MCF 10A (cell line): ENCODE measurements at regions of chr15 and their contacts with region 1.

Region 1: DNA sequence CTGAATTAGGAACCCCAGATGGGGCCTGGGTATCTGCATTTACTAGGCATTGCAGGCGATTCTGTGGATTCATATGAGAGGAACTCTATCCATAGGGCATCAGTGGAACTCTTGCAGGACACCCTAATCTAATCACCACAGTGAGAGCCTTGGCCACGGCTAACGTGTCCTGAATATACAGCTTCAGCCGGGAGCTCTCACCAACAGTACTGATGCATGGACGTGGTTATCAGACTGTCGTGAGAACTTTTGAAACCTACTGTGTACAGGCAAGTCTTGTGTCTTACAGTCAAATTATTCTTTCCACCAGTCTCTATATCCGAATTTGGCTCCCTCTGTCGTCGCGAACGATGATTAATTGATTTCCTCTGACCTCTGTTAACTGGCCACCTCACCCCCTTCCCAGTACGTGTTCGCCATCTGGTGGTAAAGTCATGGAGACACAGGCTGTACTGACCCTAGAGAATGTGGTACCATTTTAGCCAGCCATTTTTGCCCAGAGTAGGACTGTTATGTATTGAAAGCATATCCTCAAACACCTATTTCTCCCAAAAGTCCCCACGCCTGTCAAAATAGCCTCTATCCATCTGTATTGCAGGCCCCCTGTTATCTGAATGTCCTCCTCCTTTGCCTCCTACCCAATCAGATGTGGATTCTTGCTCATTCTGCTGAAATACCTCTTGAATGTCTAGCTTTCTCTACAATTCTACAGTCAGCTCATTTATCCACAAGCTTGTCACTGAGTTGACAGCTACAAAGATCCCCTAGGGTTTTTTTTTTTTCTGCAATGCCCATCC is 39.7 kb downstream of the GLDN start:
- DNase-seq: peak; percentile 87
- H3K4me3 Mint-ChIP-seq: no peak overlapping the region
- H3K27ac Mint-ChIP-seq: no peak overlapping the region
- H3K4me1 Mint-ChIP-seq: peaks cover 13% of the 10 kb centered on the region
- H3K27me3 Mint-ChIP-seq: no peaks in the 10 kb centered on the region
- CTCF ChIP-seq: peak; percentile 82

Region 2: DNA sequence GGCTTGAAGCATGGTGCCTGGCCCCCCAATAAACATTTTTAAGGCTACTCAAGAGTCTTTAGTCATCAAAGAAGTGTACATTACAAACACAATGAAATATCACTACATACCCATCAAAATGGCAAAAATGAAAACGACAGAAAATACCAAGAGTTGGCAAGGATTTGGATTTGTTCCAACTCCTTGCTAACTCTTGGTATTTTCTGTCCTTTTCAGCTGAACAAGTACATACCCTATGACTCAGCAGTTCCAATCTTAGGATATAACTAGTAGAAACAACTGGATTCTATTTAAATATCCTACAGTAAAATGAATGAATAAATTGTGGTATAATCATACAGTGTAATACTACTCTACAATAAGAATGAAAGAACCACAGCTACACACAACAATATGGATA is 1001.1 kb before region 1 on chr15:
- CTCF ChIA-PET with region 1: no interaction called
- POLR2A ChIA-PET with region 1: no interaction called
- intact Hi-C with region 1: no loop called
- DNase-seq: no peak
- H3K4me3 Mint-ChIP-seq: no peak overlapping the region
- H3K27ac Mint-ChIP-seq: no peak overlapping the region
- H3K4me1 Mint-ChIP-seq: no peaks in the 10 kb centered on the region
- H3K27me3 Mint-ChIP-seq: no peaks in the 10 kb centered on the region
- CTCF ChIP-seq: no peak

Region 3: GRCh38 chr15:50698101-50698500 is 683.1 kb before region 1 on chr15:
- CTCF ChIA-PET with region 1: interaction called, 13 read pairs
- POLR2A ChIA-PET with region 1: no interaction called
- intact Hi-C with region 1: no loop called
- DNase-seq: no peak
- H3K4me3 Mint-ChIP-seq: no peak overlapping the region
- H3K27ac Mint-ChIP-seq: no peak overlapping the region
- H3K4me1 Mint-ChIP-seq: no peaks in the 10 kb centered on the region
- H3K27me3 Mint-ChIP-seq: no peaks in the 10 kb centered on the region
- CTCF ChIP-seq: no peak

Region 4: GRCh38 chr15:50865515-50866353 is 515.5 kb before region 1 on chr15:
- CTCF ChIA-PET with region 1: no interaction called
- POLR2A ChIA-PET with region 1: no interaction called
- intact Hi-C with region 1: no loop called
- DNase-seq: no peak
- H3K4me3 Mint-ChIP-seq: no peak overlapping the region
- H3K27ac Mint-ChIP-seq: no peak overlapping the region
- H3K4me1 Mint-ChIP-seq: no peaks in the 10 kb centered on the region
- H3K27me3 Mint-ChIP-seq: peaks cover 11% of the 10 kb centered on the region
- CTCF ChIP-seq: no peak

Region 5: DNA sequence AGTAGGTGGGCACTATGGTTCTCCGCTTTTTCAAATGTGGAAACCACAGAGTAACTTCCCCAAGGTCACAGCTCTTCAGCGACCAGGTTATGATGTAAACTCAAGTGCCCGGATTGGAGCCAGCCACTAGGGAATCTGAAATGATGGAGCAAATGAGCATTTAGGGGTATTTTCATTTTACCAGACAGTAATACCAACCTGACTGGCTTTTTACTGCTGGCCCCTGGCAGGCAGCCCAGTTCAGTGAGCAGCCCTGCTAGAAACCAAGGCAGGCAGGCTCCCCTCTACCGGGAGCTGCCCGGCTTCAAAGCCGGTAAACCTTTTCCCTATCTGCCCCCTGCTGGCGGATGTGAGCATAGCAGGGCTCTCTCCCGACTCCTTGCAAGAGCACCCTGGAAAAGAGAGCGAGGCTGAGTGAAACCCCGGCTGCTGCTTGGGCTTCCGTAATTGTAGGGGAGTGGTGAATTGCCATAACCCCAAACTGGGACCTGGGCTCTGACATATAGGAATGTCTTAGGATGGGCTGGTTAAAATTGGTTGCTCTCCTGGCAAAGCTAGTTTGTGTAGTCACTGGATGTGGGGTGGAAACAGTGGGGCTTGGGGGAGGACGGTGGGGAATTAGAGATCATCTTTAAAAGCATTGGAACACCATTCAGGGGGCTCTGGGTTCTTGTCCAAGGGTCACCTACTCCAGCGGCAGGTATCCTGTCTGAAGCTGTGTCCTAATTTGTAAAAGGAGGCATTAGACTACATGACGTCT is 188.5 kb before region 1 on chr15:
- CTCF ChIA-PET with region 1: interaction called, 14 read pairs
- POLR2A ChIA-PET with region 1: interaction called, 3 read pairs
- intact Hi-C with region 1: no loop called
- DNase-seq: peak; percentile 91
- H3K4me3 Mint-ChIP-seq: no peak overlapping the region
- H3K27ac Mint-ChIP-seq: peak overlapping the region; percentile 7
- H3K4me1 Mint-ChIP-seq: peaks cover 24% of the 10 kb centered on the region
- H3K27me3 Mint-ChIP-seq: no peaks in the 10 kb centered on the region
- CTCF ChIP-seq: peak; percentile 89

Region 6: GRCh38 chr15:51227940-51228783 is 153.0 kb before region 1 on chr15:
- CTCF ChIA-PET with region 1: interaction called, 38 read pairs
- POLR2A ChIA-PET with region 1: no interaction called
- intact Hi-C with region 1: loop called (anchors 1 kb)
- DNase-seq: peak; percentile 82
- H3K4me3 Mint-ChIP-seq: peak overlapping the region; percentile 22
- H3K27ac Mint-ChIP-seq: peak overlapping the region; percentile 57
- H3K4me1 Mint-ChIP-seq: peaks cover 34% of the 10 kb centered on the region
- H3K27me3 Mint-ChIP-seq: no peaks in the 10 kb centered on the region
- CTCF ChIP-seq: no peak

Region 7: GRCh38 chr15:51281368-51281967 is 99.7 kb before region 1 on chr15:
- CTCF ChIA-PET with region 1: interaction called, 60 read pairs
- POLR2A ChIA-PET with region 1: no interaction called
- intact Hi-C with region 1: loop called (anchors 1 kb)
- DNase-seq: peak; percentile 69
- H3K4me3 Mint-ChIP-seq: no peak overlapping the region
- H3K27ac Mint-ChIP-seq: no peak overlapping the region
- H3K4me1 Mint-ChIP-seq: peaks cover 9% of the 10 kb centered on the region
- H3K27me3 Mint-ChIP-seq: peaks cover 17% of the 10 kb centered on the region
- CTCF ChIP-seq: peak; percentile 47

Region 8: DNA sequence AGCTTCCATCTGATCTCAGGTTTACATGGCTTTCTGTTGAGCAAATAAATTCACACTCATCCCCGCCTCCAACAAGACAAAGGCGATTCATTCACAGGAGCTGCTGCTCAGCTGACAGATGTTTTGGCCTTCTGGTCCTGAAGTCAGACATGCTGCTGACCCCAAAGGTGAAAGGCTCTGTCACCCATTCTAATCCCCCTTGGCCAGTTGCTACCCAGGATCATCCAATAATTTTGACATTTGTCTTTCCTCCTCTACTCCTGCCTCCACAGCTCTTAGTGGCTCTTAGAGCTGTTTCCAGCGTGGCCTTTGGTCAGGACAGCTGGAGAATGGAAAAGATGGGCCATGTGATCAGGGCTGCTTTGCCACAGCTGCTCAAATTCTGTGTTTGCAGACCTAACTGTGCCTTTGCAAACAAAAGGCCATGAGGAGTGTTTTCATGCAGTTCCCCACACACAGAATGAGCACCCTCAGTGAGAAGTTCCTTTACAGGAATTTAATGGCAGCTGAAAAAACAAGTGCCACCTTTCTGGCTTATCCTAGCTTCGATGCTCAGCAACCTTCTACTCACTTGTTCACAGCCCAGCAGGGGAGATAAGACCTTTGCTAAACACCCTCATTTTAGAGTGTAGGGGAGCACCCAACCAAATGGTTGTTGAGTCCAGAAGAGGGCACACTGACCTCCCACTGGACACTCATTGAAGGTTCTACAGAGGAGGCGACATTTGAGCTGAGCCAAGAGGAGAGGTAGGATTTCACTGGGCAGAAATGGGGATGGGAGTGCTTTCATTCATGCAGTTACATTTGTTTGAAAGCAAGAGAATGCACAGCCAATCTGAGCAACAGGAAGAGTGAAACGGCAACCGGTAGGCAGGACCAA is 81.8 kb before region 1 on chr15:
- CTCF ChIA-PET with region 1: interaction called, 10 read pairs
- POLR2A ChIA-PET with region 1: no interaction called
- intact Hi-C with region 1: no loop called
- DNase-seq: no peak
- H3K4me3 Mint-ChIP-seq: no peak overlapping the region
- H3K27ac Mint-ChIP-seq: no peak overlapping the region
- H3K4me1 Mint-ChIP-seq: no peaks in the 10 kb centered on the region
- H3K27me3 Mint-ChIP-seq: no peaks in the 10 kb centered on the region
- CTCF ChIP-seq: no peak

Region 9: DNA sequence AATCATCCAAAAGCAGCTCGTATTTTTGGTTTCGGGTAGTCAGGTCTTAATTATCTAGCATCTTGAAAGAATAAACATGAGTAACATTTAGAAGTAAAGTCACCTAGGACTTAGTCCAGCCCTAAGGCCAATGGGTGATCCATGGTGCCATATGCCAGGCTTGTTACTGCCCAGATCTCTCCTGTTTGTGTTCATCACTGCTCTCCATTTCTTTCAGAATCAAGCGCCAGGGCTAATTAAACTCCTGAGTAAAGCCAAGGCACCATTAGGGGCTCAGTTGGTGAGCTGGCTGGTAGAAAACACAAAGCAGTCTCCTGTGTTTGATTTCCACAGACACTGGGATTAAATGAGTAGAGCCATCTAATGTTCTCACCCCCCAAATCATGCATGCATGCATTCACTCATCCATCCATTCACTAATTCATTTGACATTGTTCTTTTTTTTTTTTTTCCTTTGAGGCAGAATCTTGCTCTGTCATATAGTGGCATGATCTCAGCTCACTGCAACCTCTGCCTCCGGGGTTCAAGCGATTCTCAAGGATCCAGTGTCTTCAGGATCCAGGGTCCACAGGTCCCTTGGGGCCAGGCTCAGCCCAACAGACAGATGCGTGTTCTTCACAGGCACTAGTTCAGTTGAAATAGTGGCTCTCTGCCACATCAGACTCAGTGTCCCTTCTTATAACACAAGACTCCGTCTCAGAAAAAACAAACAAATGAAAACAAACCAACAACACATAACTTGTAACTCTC is 54.0 kb before region 1 on chr15:
- CTCF ChIA-PET with region 1: no interaction called
- POLR2A ChIA-PET with region 1: no interaction called
- intact Hi-C with region 1: no loop called
- DNase-seq: no peak
- H3K4me3 Mint-ChIP-seq: no peak overlapping the region
- H3K27ac Mint-ChIP-seq: no peak overlapping the region
- H3K4me1 Mint-ChIP-seq: no peaks in the 10 kb centered on the region
- H3K27me3 Mint-ChIP-seq: no peaks in the 10 kb centered on the region
- CTCF ChIP-seq: no peak

Region 10: DNA sequence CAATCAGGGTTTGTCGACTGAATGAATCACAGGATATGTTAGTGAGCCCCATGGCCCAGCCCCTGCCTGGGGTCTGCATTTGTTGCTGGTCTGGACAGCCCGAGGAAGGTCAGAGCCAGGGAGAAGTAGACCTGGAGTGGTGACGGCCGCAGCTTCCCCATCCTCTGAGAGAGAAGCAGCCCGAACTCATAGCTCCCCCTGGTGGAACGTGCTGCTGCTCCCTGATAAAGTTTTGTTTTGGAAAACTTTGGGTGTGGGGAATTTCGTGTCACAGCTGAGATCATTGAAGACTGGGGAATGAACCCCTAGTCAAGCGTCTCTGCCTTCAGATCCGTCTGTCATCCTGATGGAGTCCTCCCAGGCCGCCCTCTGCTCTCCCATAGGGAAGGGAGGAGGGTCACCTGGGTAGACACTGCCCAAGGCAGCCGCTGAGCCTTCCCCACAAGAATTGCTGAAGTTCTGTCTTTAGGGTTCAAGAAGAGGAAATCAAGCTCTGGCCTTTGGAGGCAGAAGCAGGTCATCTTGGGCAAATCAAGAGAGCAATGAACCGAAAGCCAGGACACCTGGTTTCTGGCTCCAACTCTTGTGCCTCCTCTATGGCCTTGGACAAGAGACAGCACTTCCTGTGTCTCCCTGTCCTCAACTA is 20.8 kb after region 1 on chr15:
- CTCF ChIA-PET with region 1: interaction called, 33 read pairs
- POLR2A ChIA-PET with region 1: no interaction called
- intact Hi-C with region 1: no loop called
- DNase-seq: peak; percentile 52
- H3K4me3 Mint-ChIP-seq: no peak overlapping the region
- H3K27ac Mint-ChIP-seq: no peak overlapping the region
- H3K4me1 Mint-ChIP-seq: peaks cover 6% of the 10 kb centered on the region
- H3K27me3 Mint-ChIP-seq: no peaks in the 10 kb centered on the region
- CTCF ChIP-seq: peak; percentile 42

Region 11: DNA sequence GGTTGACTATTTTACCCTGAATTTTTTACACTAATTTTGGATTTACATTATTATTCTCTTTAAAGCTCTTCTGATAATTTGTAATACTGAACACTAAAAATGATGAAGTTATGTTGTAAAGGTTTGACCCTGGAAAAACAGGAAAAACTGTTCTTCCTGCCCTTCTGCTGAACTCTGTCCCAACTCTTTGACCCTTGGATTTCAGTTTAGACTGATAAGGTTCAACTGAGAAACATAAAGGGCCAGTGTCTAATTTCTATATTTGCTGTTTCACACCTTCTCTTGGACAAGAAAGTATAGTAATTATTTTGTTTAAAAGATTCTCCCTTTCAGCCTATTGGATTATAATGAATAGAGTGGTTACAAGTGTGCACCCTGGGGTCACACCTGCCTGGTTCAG is 435.4 kb after region 1 on chr15:
- CTCF ChIA-PET with region 1: no interaction called
- POLR2A ChIA-PET with region 1: no interaction called
- intact Hi-C with region 1: no loop called
- DNase-seq: no peak
- H3K4me3 Mint-ChIP-seq: no peak overlapping the region
- H3K27ac Mint-ChIP-seq: no peak overlapping the region
- H3K4me1 Mint-ChIP-seq: no peaks in the 10 kb centered on the region
- H3K27me3 Mint-ChIP-seq: no peaks in the 10 kb centered on the region
- CTCF ChIP-seq: no peak